ENCODE measurements at regions of chr12 and their contacts with region 1.

Region 1: GRCh38 chr12:7319930-7320329 is 16.1 kb downstream of the ACSM4 start:
- DNase-seq: no peak
- ATAC-seq: no peak
- H3K4me3 ChIP-seq: no peak overlapping the region
- H3K4me3 Mint-ChIP-seq: no peak overlapping the region
- H3K27ac ChIP-seq: no peak overlapping the region
- H3K27ac Mint-ChIP-seq: no peak overlapping the region
- H3K4me1 ChIP-seq: no peaks in the 10 kb centered on the region
- H3K4me1 Mint-ChIP-seq: no peaks in the 10 kb centered on the region
- H3K27me3 ChIP-seq: no peaks in the 10 kb centered on the region
- H3K27me3 Mint-ChIP-seq: peaks cover 0 to 2% of the 10 kb centered on the region in 2 donors
- CTCF ChIP-seq: peak; percentile 19

Region 2: GRCh38 chr12:7387289-7387688 is 67.4 kb after region 1 on chr12:
- intact Hi-C with region 1: loop called (anchors 5 kb)
- DNase-seq: peak in 1 of 2 donors; percentile 16
- ATAC-seq: no peak
- H3K4me3 ChIP-seq: no peak overlapping the region
- H3K4me3 Mint-ChIP-seq: no peak overlapping the region
- H3K27ac ChIP-seq: no peak overlapping the region
- H3K27ac Mint-ChIP-seq: no peak overlapping the region
- H3K4me1 ChIP-seq: no peaks in the 10 kb centered on the region
- H3K4me1 Mint-ChIP-seq: no peaks in the 10 kb centered on the region
- H3K27me3 ChIP-seq: peaks cover 2% of the 10 kb centered on the region
- H3K27me3 Mint-ChIP-seq: peaks cover 13 to 39% of the 10 kb centered on the region in 2 donors
- CTCF ChIP-seq: peak; percentile 10

Region 3: GRCh38 chr12:7460375-7461259 is 140.7 kb after region 1 on chr12:
- intact Hi-C with region 1: loop called (anchors 1 kb)
- DNase-seq: peak; percentile 43 to 72
- ATAC-seq: peak; percentile 77 to 83 (median 80)
- H3K4me3 ChIP-seq: no peak overlapping the region
- H3K4me3 Mint-ChIP-seq: no peak overlapping the region
- H3K27ac ChIP-seq: no peak overlapping the region
- H3K27ac Mint-ChIP-seq: no peak overlapping the region
- H3K4me1 ChIP-seq: no peaks in the 10 kb centered on the region
- H3K4me1 Mint-ChIP-seq: no peaks in the 10 kb centered on the region
- H3K27me3 ChIP-seq: peaks cover 4% of the 10 kb centered on the region
- H3K27me3 Mint-ChIP-seq: peaks cover 5 to 21% of the 10 kb centered on the region in 2 donors
- CTCF ChIP-seq: peak; percentile 76

Measured in natural killer cell (primary cell).